Psoas muscle (tissue), 8 donors: ENCODE measurements at regions of chr22 and their contacts with region 1.

Region 1: DNA sequence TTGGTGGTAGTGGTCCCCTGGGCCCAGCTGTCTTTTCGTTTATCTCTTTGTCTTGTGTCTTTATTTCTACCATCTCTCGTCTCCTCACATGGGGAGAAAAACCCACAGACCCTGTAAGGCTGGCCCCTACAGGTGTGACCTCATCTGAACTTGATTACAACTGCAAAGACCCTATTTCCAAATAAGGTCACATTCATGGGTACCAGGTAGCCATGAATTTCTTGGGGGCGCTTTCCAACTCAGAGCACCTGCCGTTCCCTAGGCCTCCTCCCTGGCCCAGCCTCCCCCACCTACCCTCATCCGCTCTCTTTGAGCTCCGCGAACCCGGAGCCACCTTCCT is 14.0 kb upstream of the RRP7A start:
- DNase-seq: no peak
- ATAC-seq: no peak
- H3K4me3 ChIP-seq: no peak overlapping the region
- H3K27ac ChIP-seq: no peak overlapping the region
- H3K4me1 ChIP-seq: peaks cover 4% of the 10 kb centered on the region
- H3K27me3 ChIP-seq: no peaks in the 10 kb centered on the region
- CTCF ChIP-seq: no peak

Region 2: DNA sequence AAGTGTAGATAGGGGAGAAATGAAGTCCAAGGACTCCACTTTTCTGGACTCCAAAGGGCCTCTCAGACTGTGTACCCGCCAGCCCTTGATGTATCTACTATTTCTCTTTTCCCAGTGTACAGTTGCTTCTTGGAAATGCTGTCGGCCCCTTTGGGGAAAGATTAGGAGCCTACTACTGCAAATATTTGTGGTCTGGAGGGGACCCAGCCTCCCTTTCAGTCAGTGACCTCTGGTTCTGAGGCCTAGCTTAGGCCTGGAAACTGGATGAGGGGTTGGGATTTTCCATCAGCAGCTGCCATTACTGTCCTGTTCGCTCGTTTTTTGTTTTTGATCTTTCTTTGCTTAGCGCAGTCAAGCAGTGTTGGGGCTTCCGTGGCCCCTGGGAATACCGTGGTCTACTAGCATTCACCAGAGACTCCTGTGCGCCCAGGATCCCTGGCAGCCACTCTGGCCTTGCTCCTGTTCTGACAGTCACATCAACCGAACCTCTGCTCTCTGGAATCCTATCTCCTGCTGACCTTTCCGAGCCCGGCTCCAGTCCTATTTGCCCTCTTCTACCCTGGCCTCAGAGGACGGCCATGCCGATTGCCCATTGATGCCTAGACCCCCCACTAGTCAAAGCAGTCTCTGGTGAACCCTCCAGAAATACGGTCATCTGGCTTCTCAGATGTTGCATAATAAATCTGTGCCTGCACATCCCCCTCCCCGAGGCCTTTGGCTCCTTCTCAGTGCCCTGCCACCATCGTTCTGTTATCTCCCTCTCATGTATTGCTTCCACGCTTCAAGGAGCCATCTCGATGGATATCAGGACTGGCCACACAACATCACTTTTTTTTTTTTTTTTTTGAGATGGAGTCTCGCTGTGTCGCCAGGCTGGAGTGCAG is 12.7 kb before region 1 on chr22:
- intact Hi-C with region 1: no loop called
- DNase-seq: no peak
- ATAC-seq: no peak
- H3K4me3 ChIP-seq: no peak overlapping the region
- H3K27ac ChIP-seq: no peak overlapping the region
- H3K4me1 ChIP-seq: no peaks in the 10 kb centered on the region
- H3K27me3 ChIP-seq: no peaks in the 10 kb centered on the region
- CTCF ChIP-seq: no peak

Region 3: GRCh38 chr22:42553475-42554361 is 20.1 kb after region 1 on chr22 and contains the start of gene SERHL2:
- intact Hi-C with region 1: loop called in 1 of 2 experiments (anchors 2 kb)
- DNase-seq: peak; percentile 89 to 93
- ATAC-seq: peak; percentile 88 to 95 (median 92)
- H3K4me3 ChIP-seq: peak within 1 kb of the TSS; percentile 72
- H3K27ac ChIP-seq: no peak within 1 kb of the TSS
- H3K4me1 ChIP-seq: peaks cover 5% of the 10 kb centered on the region
- H3K27me3 ChIP-seq: no peaks in the 10 kb centered on the region
- CTCF ChIP-seq: no peak
- total RNA-seq, gene SERHL2: 0.82 to 1.6 (median 0.97) TPM